ENCODE measurements at regions of chr20 and their contacts with region 1.

Region 1: GRCh38 chr20:56945059-56945458 is 316.0 kb downstream of the TFAP2C start:
- DNase-seq: no peak
- ATAC-seq: no peak
- H3K4me3 ChIP-seq: no peak overlapping the region
- H3K27ac ChIP-seq: no peak overlapping the region
- H3K4me1 ChIP-seq: no peaks in the 10 kb centered on the region
- H3K27me3 ChIP-seq: peaks cover 0 to 38% of the 10 kb centered on the region in 2 donors
- CTCF ChIP-seq: no peak

Region 2: GRCh38 chr20:57006411-57007170 is 61.5 kb after region 1 on chr20:
- intact Hi-C with region 1: loop called in 1 of 2 experiments (anchors 10 kb)
- DNase-seq: no peak
- ATAC-seq: no peak
- H3K4me3 ChIP-seq: no peak overlapping the region
- H3K27ac ChIP-seq: no peak overlapping the region
- H3K4me1 ChIP-seq: no peaks in the 10 kb centered on the region
- H3K27me3 ChIP-seq: peaks cover 0 to 95% of the 10 kb centered on the region in 2 donors
- CTCF ChIP-seq: no peak